ENCODE measurements at regions of chr1 and their contacts with region 1.

Region 1: GRCh38 chr1:223087291-223088255 is 55.5 kb downstream of the TLR5 start:
- DNase-seq: no peak
- ATAC-seq: no peak
- H3K4me3 ChIP-seq: no peak overlapping the region
- H3K27ac ChIP-seq: no peak overlapping the region
- H3K4me1 ChIP-seq: no peaks in the 10 kb centered on the region
- H3K27me3 ChIP-seq: no peaks in the 10 kb centered on the region; a peak in 2 of 4 replicates
- CTCF ChIP-seq: no peak
- EP300 ChIP-seq: no peak
- POLR2A ChIP-seq: no peak
- RAD21 ChIP-seq: no peak

Region 2: DNA sequence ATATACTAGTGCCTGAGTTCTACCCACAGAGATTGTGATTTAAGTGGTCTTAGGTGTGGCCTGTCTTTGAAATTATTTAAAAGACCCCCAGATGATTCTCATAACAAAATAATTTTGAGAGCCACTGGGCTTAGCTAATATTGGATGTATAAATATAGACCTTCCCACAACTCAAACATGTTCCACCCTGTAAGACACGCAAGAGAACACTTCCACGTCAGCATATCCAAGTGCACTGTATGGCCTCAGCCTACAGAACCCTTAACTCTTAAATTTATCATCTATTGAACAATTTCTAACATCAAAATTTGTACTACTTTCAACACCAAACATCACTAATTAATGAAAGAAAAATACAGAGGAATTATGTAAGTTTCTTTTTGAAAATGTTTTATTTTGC is 348.1 kb before region 1 on chr1:
- CTCF ChIA-PET with region 1: interaction called, 29 read pairs
- POLR2A ChIA-PET with region 1: no interaction called
- RAD21 ChIA-PET with region 1: interaction called, 11 read pairs
- SMC1A ChIA-PET with region 1: interaction called, 11 read pairs
- in situ Hi-C with region 1: loop called (anchors 10 kb)
- intact Hi-C with region 1: no loop called
- DNase-seq: no peak
- ATAC-seq: no peak
- H3K4me3 ChIP-seq: no peak overlapping the region
- H3K27ac ChIP-seq: no peak overlapping the region
- H3K4me1 ChIP-seq: no peaks in the 10 kb centered on the region
- H3K27me3 ChIP-seq: no peaks in the 10 kb centered on the region
- CTCF ChIP-seq: no peak
- EP300 ChIP-seq: no peak
- POLR2A ChIP-seq: no peak
- RAD21 ChIP-seq: no peak

Region 3: GRCh38 chr1:222792744-222793143 is 294.8 kb before region 1 on chr1:
- CTCF ChIA-PET with region 1: interaction called, 11 read pairs
- POLR2A ChIA-PET with region 1: no interaction called
- RAD21 ChIA-PET with region 1: interaction called, 4 read pairs
- SMC1A ChIA-PET with region 1: interaction called, 3 read pairs
- in situ Hi-C with region 1: no loop called
- intact Hi-C with region 1: no loop called
- DNase-seq: no peak
- ATAC-seq: 0 out of 3 replicates have a peak, but pooled peaks have one; percentile 29
- H3K4me3 ChIP-seq: no peak overlapping the region
- H3K27ac ChIP-seq: no peak overlapping the region
- H3K4me1 ChIP-seq: no peaks in the 10 kb centered on the region
- H3K27me3 ChIP-seq: no peaks in the 10 kb centered on the region; a peak in 1 of 4 replicates
- CTCF ChIP-seq: peak; percentile 19 to 51 (median 32); a peak in 3 of 6 replicates
- EP300 ChIP-seq: no peak
- POLR2A ChIP-seq: no peak
- RAD21 ChIP-seq: peak; percentile 75

Region 4: GRCh38 chr1:222950892-222951291 is 136.7 kb before region 1 on chr1:
- CTCF ChIA-PET with region 1: no interaction called
- POLR2A ChIA-PET with region 1: no interaction called
- RAD21 ChIA-PET with region 1: no interaction called
- SMC1A ChIA-PET with region 1: no interaction called
- in situ Hi-C with region 1: no loop called
- intact Hi-C with region 1: no loop called
- DNase-seq: no peak
- ATAC-seq: no peak
- H3K4me3 ChIP-seq: no peak overlapping the region
- H3K27ac ChIP-seq: no peak overlapping the region
- H3K4me1 ChIP-seq: no peaks in the 10 kb centered on the region
- H3K27me3 ChIP-seq: no peaks in the 10 kb centered on the region
- CTCF ChIP-seq: no peak
- EP300 ChIP-seq: no peak
- POLR2A ChIP-seq: no peak
- RAD21 ChIP-seq: no peak

Region 5: DNA sequence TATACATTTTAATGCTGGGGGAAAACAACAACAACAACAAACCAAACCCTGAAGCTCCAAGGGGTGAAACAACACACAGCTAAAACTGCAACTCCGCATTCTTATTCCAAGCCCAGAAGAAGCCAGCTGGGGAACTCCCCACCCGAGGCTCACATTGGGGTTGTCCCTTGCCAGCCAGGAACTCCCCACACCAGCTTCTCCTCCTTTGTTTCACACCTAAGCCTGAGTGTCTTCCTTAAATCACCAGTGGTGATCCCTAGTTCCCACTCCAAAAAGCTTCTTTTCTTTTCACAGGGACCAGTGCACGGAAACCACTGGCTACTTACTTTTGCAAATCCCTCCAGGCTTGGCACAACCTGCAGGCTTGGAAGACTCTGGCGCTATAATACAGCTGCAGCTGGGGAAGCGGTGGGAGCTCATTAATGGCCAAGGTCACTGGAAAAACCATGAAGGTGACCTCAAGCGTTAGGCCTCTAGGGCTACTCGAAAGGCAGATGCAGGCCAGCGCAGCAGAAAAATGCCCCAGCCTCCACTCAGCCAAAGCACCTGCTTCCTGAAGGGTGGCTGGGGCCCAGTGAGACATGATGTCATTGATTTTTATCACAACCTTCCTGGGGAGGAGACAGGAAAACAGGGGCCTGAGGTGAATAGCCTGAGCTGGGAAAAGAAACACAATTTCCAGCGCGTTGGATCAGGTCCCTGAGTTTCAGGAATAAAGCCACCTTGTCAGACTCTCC is 15.4 kb after region 1 on chr1:
- CTCF ChIA-PET with region 1: interaction called, 17 read pairs
- POLR2A ChIA-PET with region 1: no interaction called
- RAD21 ChIA-PET with region 1: no interaction called
- SMC1A ChIA-PET with region 1: interaction called, 3 read pairs
- in situ Hi-C with region 1: no loop called
- intact Hi-C with region 1: no loop called
- DNase-seq: no peak
- ATAC-seq: no peak
- H3K4me3 ChIP-seq: no peak overlapping the region
- H3K27ac ChIP-seq: no peak overlapping the region
- H3K4me1 ChIP-seq: no peaks in the 10 kb centered on the region
- H3K27me3 ChIP-seq: no peaks in the 10 kb centered on the region
- CTCF ChIP-seq: no peak
- EP300 ChIP-seq: no peak
- POLR2A ChIP-seq: no peak
- RAD21 ChIP-seq: no peak

Region 6: DNA sequence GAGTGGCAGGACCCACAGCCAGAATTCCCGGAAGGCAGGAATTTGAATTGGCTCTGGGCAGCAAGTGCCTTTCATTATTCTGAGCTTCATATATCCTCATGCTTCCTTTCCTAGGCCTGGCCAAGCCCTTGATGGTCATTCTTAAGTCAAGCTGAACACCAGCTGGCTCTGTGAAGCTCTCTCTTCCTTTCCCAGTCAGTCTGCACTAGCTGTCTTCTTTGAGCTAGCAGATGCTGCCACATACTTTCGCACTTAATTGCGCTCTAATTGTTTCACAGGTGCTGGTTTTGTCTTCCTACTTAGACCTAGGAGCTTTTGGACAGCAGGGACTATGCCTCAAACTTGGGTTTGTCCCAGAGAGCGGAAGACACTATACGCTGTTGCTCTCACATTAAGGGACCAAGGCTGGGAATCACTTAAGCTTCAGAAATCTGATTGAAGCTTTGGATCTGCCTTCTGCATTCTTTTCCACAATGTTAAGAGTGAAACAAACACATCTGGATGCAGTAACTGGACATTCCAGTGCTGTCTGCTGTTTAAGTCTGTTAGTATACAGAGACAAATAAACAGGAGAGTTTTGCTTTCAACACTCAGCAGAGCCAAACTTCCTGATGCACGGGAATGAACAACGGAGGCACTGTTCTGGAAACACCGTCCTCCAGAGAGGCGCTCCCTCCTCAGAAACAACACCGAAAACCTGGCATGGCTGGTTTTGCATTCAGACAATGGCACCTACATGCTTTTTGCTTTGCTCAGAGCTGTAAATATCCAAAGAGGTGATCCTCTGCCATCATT is 53.2 kb after region 1 on chr1:
- CTCF ChIA-PET with region 1: no interaction called
- POLR2A ChIA-PET with region 1: no interaction called
- RAD21 ChIA-PET with region 1: no interaction called
- SMC1A ChIA-PET with region 1: no interaction called
- in situ Hi-C with region 1: no loop called
- intact Hi-C with region 1: no loop called
- DNase-seq: no peak
- ATAC-seq: no peak
- H3K4me3 ChIP-seq: no peak overlapping the region
- H3K27ac ChIP-seq: no peak overlapping the region
- H3K4me1 ChIP-seq: peaks cover 12% of the 10 kb centered on the region
- H3K27me3 ChIP-seq: no peaks in the 10 kb centered on the region; a peak in 1 of 4 replicates
- CTCF ChIP-seq: no peak
- EP300 ChIP-seq: no peak
- POLR2A ChIP-seq: no peak
- RAD21 ChIP-seq: no peak

Region 7: GRCh38 chr1:223207293-223208066 is 119.9 kb after region 1 on chr1:
- CTCF ChIA-PET with region 1: no interaction called
- POLR2A ChIA-PET with region 1: no interaction called
- RAD21 ChIA-PET with region 1: no interaction called
- SMC1A ChIA-PET with region 1: no interaction called
- in situ Hi-C with region 1: no loop called
- intact Hi-C with region 1: no loop called
- DNase-seq: no peak
- ATAC-seq: no peak
- H3K4me3 ChIP-seq: no peak overlapping the region
- H3K27ac ChIP-seq: no peak overlapping the region
- H3K4me1 ChIP-seq: no peaks in the 10 kb centered on the region
- H3K27me3 ChIP-seq: no peaks in the 10 kb centered on the region
- CTCF ChIP-seq: no peak
- EP300 ChIP-seq: no peak
- POLR2A ChIP-seq: no peak
- RAD21 ChIP-seq: no peak